ENCODE measurements at regions of chr7 and their contacts with region 1.

Region 1: GRCh38 chr7:28155019-28155660 is 25.5 kb downstream of the JAZF1 start:
- DNase-seq: no peak
- H3K4me3 Mint-ChIP-seq: peak overlapping the region; percentile 43
- H3K27ac Mint-ChIP-seq: peak overlapping the region; percentile 75
- H3K4me1 Mint-ChIP-seq: peaks cover 58% of the 10 kb centered on the region
- H3K27me3 Mint-ChIP-seq: peaks cover 5% of the 10 kb centered on the region

Region 2: GRCh38 chr7:27662490-27663205 is 492.5 kb before region 1 on chr7 and contains the start of gene HIBADH:
- intact Hi-C with region 1: loop called (anchors 10 kb)
- DNase-seq: peak; percentile 96
- H3K4me3 Mint-ChIP-seq: peak within 1 kb of the TSS; percentile 86
- H3K27ac Mint-ChIP-seq: peak within 1 kb of the TSS; percentile 81
- H3K4me1 Mint-ChIP-seq: peaks cover 30% of the 10 kb centered on the region
- H3K27me3 Mint-ChIP-seq: no peaks in the 10 kb centered on the region
- total RNA-seq, gene HIBADH: 21.0 and 21.2 TPM in 2 replicates

Region 3: DNA sequence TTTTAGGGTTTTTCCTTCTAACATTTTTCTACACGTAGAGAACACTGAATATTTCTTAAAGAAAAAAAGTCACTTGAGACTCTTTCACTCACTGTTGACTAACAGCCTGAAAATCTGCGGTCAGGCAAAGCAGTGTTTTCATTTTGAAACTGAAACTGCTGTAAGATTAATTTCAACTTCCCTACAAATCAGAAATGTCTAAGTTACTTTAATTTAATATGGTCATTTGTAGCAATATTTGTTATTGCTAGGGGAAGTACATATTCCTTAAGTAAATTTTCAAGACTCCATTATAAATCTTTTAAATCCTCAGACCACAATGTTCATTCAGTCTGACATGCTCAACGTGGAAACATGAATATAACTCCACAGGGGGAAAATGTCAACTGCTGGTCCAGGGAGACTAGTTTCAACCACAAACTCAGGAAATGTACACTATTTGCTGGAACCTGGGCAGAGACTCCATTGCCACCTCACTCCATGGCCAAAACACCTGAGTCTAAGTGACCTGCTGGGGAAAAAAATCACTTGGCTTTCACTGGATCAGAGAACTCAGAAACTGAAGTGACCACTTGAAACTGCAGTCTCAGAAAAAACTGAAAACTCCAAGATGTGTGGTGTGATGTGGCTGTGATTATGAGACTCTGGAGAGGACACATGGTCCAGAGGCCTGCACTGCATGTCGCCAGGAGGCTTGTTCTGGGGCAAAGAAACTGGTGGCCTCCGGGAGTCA is 253.9 kb before region 1 on chr7:
- intact Hi-C with region 1: loop called (anchors 1 kb)
- DNase-seq: peak; percentile 32
- H3K4me3 Mint-ChIP-seq: no peak overlapping the region
- H3K27ac Mint-ChIP-seq: no peak overlapping the region
- H3K4me1 Mint-ChIP-seq: peaks cover 44% of the 10 kb centered on the region
- H3K27me3 Mint-ChIP-seq: peaks cover 9% of the 10 kb centered on the region

Region 4: DNA sequence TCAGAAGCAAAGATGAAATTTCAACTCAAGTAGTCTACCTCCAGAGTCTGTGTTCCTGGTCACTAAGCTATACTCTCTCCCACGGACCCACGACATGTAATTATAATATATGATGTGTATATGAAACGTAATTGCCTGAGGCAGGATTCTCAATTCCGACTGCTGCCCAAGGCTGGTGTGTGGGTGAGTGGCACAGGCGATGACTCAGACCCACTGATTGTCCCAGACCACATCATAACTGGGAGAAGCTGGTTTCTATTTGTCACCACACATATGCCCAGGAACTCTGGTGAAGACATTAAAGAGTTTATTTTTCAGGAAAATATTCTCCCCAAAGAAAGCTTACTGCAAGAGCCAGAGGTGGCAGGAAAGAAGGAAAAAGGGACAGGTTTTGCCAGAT is 193.9 kb before region 1 on chr7:
- intact Hi-C with region 1: no loop called
- DNase-seq: no peak
- H3K4me3 Mint-ChIP-seq: no peak overlapping the region
- H3K27ac Mint-ChIP-seq: no peak overlapping the region
- H3K4me1 Mint-ChIP-seq: no peaks in the 10 kb centered on the region
- H3K27me3 Mint-ChIP-seq: peaks cover 15% of the 10 kb centered on the region

Region 5: DNA sequence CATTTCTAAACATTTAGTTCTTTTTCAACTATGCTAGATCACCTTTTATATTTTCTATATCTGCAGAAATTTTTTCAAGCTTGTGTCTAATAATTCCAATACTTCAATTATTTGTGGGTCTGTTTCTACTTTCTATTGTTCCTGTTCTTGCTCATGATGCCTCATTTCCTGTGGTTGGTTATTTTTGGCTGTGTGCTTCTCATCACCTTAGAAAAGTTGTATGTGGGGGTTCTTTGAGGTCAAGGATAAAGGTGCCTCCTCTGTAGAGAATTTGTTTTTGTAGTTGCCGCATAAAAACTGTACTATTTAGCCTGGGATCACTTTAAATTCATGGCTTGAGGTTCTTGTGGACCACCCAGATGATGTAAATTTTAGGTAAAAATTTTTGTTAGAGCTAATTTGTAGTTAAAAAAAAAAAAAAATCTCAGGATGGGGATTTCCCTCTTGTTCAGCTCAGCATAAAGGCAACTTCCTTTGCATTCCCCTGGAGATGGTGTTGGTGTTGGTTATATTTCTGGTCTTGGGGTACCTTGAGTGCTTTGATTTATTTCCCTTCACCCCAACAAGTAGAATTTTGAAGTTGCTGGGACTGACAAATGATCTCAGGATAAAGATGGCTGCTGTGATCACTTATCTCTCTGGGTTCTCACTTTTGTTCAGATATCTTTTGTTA is 52.5 kb after region 1 on chr7:
- intact Hi-C with region 1: loop called (anchors 1 kb)
- DNase-seq: no peak
- H3K4me3 Mint-ChIP-seq: peak overlapping the region; percentile 2
- H3K27ac Mint-ChIP-seq: peak overlapping the region; percentile 7
- H3K4me1 Mint-ChIP-seq: peaks cover 38% of the 10 kb centered on the region
- H3K27me3 Mint-ChIP-seq: peaks cover 8% of the 10 kb centered on the region

Region 6: GRCh38 chr7:28292834-28293526 is 137.8 kb after region 1 on chr7:
- intact Hi-C with region 1: loop called (anchors 1 kb)
- DNase-seq: no peak
- H3K4me3 Mint-ChIP-seq: no peak overlapping the region
- H3K27ac Mint-ChIP-seq: no peak overlapping the region
- H3K4me1 Mint-ChIP-seq: peaks cover 8% of the 10 kb centered on the region
- H3K27me3 Mint-ChIP-seq: peaks cover 28% of the 10 kb centered on the region

Region 7: GRCh38 chr7:29035044-29035740 is 880.1 kb after region 1 on chr7:
- intact Hi-C with region 1: loop called (anchors 10 kb)
- DNase-seq: peak; percentile 12
- H3K4me3 Mint-ChIP-seq: peak overlapping the region; percentile 41
- H3K27ac Mint-ChIP-seq: peak overlapping the region; percentile 85
- H3K4me1 Mint-ChIP-seq: peaks cover 42% of the 10 kb centered on the region
- H3K27me3 Mint-ChIP-seq: no peaks in the 10 kb centered on the region